ENCODE measurements at regions of chr17 and their contacts with region 1.

Region 1: GRCh38 chr17:7435221-7435675 is at the start of gene TMEM102:
- DNase-seq: peak; percentile 97
- H3K4me3 Mint-ChIP-seq: peak within 1 kb of the TSS; percentile 91
- H3K27ac Mint-ChIP-seq: peak within 1 kb of the TSS; percentile 94
- H3K4me1 Mint-ChIP-seq: peaks cover 38% of the 10 kb centered on the region
- H3K27me3 Mint-ChIP-seq: peaks cover 5% of the 10 kb centered on the region
- total RNA-seq, gene TMEM102: 12.3 and 14.0 TPM in 2 replicates

Region 2: GRCh38 chr17:7239091-7240027 is 195.9 kb before region 1 on chr17 and contains the start of gene PHF23:
- intact Hi-C with region 1: loop called (anchors 1 kb)
- DNase-seq: peak; percentile 98
- H3K4me3 Mint-ChIP-seq: peak within 1 kb of the TSS; percentile 97
- H3K27ac Mint-ChIP-seq: peak within 1 kb of the TSS; percentile 94
- H3K4me1 Mint-ChIP-seq: peaks cover 68% of the 10 kb centered on the region
- H3K27me3 Mint-ChIP-seq: no peaks in the 10 kb centered on the region
- total RNA-seq, gene PHF23: 52.5 and 55.4 TPM in 2 replicates

Region 3: GRCh38 chr17:7329374-7329996 is 105.8 kb before region 1 on chr17:
- intact Hi-C with region 1: loop called (anchors 1 kb)
- DNase-seq: peak; percentile 94
- H3K4me3 Mint-ChIP-seq: peak overlapping the region; percentile 93
- H3K27ac Mint-ChIP-seq: peak overlapping the region; percentile 94
- H3K4me1 Mint-ChIP-seq: peaks cover 38% of the 10 kb centered on the region
- H3K27me3 Mint-ChIP-seq: no peaks in the 10 kb centered on the region

Region 4: DNA sequence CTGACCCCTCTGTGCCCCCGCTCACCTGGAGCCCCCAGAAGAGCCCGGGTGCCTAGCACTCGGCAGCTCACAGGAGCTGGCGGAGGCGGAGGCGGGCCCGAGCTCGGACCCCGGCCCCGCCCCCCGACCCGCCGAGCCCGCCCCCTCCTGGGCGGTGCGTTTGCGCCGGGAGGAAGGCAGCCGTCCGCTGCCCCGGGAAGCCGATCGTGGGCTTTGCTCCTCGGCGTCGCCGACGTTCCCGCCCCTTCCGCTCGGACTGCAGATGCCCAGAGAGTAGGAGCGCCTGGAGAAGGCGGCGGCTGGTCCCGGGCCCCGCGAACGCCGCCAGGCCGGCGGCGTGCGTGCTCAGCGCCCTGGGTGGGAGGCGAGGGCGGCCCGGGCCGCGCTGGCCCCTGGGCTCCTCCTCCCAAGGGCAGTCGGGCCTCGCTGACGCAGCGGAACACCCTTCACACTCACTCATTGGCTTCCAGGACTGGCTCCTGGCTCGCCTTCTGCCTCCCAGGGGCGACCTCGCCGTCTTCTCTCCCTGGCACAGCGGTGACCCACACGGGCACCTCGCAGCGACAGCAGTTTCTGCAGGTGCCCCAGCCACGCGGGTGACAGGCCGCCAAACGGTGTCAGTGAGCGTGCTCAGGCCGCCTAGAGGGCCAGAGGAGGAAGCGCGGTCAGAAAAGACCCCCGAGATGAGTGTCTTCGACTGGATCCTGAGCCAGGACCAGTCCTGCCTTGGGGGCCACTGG is 40.6 kb before region 1 on chr17 and contains the start of gene PLSCR3:
- intact Hi-C with region 1: loop called (anchors 2 kb)
- DNase-seq: peak; percentile 82
- H3K4me3 Mint-ChIP-seq: peak within 1 kb of the TSS; percentile 97
- H3K27ac Mint-ChIP-seq: peak within 1 kb of the TSS; percentile 96
- H3K4me1 Mint-ChIP-seq: peaks cover 22% of the 10 kb centered on the region
- H3K27me3 Mint-ChIP-seq: peaks cover 2% of the 10 kb centered on the region
- total RNA-seq, gene PLSCR3: 77.1 and 78.2 TPM in 2 replicates

Region 5: GRCh38 chr17:7466639-7467341 is 31.5 kb after region 1 on chr17:
- intact Hi-C with region 1: no loop called
- DNase-seq: no peak
- H3K4me3 Mint-ChIP-seq: no peak overlapping the region
- H3K27ac Mint-ChIP-seq: peak overlapping the region; percentile 52
- H3K4me1 Mint-ChIP-seq: peaks cover 12% of the 10 kb centered on the region
- H3K27me3 Mint-ChIP-seq: no peaks in the 10 kb centered on the region

Region 6: DNA sequence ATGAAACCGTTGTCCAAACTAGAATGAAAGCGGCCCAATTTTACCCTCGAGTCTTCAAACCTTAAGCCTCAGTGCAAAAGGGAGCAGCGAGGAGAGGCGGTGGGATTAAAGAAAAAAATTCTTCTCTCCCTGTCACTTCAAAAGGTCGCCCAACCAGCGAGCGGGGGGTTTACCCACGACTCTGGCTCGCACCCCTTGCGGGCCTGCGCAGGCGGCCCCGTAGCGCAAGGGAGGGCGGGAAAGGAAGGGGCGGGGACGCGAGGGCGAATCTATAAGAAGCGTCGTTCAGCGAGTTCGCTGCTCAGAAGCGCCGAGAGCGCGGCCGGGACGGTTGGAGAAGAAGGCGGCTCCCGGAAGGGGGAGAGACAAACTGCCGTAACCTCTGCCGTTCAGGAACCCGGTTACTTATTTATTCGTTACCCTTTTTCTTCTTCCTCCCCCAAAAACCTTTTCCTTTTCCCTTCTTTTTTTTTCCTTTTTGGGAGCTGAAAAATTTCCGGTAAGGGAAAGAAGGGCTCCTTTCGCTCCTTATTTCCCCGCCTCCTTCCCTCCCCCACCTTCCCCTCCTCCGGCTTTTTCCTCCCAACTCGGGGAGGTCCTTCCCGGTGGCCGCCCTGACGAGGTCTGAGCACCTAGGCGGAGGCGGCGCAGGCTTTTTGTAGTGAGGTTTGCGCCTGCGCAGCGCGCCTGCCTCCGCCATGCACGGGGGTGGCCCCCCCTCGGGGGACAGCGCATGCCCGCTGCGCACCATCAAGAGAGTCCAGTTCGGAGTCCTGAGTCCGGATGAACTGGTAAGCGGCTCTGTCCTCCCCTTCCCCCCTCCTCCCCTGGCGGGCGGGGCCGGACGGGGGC is 49.0 kb after region 1 on chr17 and contains the start of gene POLR2A:
- intact Hi-C with region 1: loop called (anchors 1 kb)
- DNase-seq: peak; percentile 96
- H3K4me3 Mint-ChIP-seq: peak within 1 kb of the TSS; percentile 96
- H3K27ac Mint-ChIP-seq: peak within 1 kb of the TSS; percentile 98
- H3K4me1 Mint-ChIP-seq: peaks cover 56% of the 10 kb centered on the region
- H3K27me3 Mint-ChIP-seq: no peaks in the 10 kb centered on the region
- total RNA-seq, gene POLR2A: 221 and 223 TPM in 2 replicates

Region 7: DNA sequence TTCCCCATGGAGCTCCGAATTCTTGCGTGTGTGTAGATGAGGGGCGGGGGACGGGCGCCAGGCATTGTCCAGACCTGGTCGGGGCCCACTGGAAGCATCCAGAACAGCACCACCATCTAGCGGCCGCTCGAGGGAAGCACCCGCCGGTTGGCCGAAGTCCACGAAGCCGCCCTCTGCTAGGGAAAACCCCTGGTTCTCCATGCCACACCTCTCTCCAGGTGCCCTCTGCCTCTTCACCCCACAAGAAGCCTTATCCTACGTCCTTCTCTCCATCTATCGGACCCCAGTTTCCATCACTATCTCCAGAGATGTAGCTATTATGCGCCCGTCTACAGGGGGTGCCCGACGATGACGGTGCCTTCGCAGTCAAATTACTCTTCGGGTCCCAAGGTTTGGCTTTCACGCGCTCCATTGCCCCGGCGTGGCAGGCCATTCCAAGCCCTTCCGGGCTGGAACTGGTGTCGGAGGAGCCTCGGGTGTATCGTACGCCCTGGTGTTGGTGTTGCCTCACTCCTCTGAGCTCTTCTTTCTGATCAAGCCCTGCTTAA is 125.9 kb after region 1 on chr17:
- intact Hi-C with region 1: loop called (anchors 1 kb)
- DNase-seq: peak; percentile 81
- H3K4me3 Mint-ChIP-seq: peak overlapping the region; percentile 97
- H3K27ac Mint-ChIP-seq: peak overlapping the region; percentile 92
- H3K4me1 Mint-ChIP-seq: peaks cover 56% of the 10 kb centered on the region
- H3K27me3 Mint-ChIP-seq: no peaks in the 10 kb centered on the region

Region 8: DNA sequence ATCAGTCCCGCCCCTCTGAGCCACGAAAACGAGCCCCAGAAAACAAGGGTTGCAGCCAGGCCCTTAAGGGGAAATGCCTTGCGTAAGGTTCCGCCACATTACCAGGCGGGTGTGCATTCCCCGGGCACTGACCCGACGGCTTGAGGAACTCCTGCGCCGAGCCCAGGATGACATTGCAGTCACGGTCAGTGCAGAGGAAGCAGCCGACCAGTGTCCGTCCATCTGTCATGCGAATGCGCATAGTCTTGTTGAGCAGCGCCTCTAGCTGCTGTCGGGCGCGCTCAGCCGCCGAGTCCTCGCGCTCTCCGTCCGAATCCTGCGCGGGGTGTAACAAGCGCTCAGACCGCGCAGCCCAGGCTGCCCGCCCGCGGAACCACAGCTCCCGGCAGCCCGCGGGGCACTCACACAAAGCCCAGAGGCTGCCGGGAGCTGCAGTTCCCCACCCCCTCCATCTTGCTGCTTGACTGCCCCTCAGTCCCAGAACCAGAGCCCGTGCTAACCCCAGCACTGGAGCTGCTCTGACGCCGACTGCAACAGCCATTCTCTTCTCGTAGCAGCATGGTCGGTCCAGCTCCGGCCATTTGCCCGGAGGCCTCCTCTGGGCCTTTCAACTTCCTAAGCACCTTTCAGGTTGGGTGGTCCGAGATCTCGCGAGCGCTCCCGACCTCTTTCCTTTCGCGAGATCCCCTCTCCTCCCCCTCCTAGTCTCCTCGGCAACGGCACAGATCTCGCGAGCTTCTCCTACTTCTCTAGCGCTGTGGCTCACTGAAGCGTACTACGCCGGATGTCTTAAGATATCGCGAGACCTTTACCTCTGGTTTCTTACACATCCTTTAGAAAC is 421.9 kb after region 1 on chr17 and contains the start of gene NAA38:
- intact Hi-C with region 1: loop called (anchors 1 kb)
- DNase-seq: peak; percentile 92
- H3K4me3 Mint-ChIP-seq: no peak within 1 kb of the TSS
- H3K27ac Mint-ChIP-seq: no peak within 1 kb of the TSS
- H3K4me1 Mint-ChIP-seq: no peaks in the 10 kb centered on the region
- H3K27me3 Mint-ChIP-seq: no peaks in the 10 kb centered on the region
- total RNA-seq, gene NAA38: 36.4 and 43.5 TPM in 2 replicates